CD4-positive, alpha-beta memory T cell (primary cell): ENCODE measurements at regions of chr10 and their contacts with region 1.

Region 1: DNA sequence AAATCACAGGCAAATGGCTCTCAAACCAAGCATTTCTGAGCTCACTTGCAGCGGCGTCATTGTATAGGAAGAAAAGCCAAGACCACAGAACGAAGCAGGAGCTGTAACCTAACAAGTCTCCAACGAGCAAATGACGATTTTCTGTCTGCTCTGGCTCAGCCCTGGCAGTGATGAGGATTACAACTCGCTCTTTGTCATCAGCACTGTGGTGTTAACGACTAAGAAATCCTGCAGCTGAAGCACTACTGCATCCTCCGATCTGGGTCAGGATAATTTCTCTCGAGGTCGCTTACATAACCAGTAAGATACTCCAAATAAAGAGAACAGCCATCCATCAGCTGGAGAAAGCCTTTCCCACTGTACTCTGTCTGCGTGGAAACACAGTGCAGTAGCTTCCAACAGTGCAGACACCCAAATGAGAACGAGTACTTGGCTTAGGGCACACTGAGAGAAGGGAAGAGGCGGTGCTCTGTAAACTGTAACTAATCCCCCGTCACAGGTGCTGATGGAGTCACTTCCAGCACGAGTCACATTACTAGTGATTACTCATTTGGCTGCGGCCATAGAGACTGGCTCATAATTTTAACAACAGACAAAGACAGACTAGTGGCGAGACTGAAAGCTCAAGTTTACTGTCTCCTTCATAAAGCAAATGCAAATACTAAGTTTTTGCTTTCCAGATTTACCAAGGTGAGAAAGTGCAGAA is 135.8 kb downstream of the NRBF2 start:
- DNase-seq: peak; percentile 86 to 95 (median 92)
- H3K4me3 ChIP-seq: peak overlapping the region; percentile 59 to 83
- H3K4me3 Mint-ChIP-seq: peak overlapping the region; percentile 96 to 100 (median 98)
- H3K27ac ChIP-seq: peak overlapping the region; percentile 94
- H3K27ac Mint-ChIP-seq: peak overlapping the region; percentile 95 to 100 (median 100)
- H3K4me1 ChIP-seq: peaks cover 35% of the 10 kb centered on the region
- H3K4me1 Mint-ChIP-seq: peaks cover 10 to 25% (median 19%) of the 10 kb centered on the region in 4 donors
- H3K27me3 ChIP-seq: no peaks in the 10 kb centered on the region
- H3K27me3 Mint-ChIP-seq: no peaks in the 10 kb centered on the region

Region 2: GRCh38 chr10:61628875-61629513 is 1640.0 kb before region 1 on chr10:
- CTCF ChIA-PET with region 1: no interaction called
- POLR2A ChIA-PET with region 1: no interaction called
- intact Hi-C with region 1: no loop called
- DNase-seq: no peak
- H3K4me3 ChIP-seq: no peak overlapping the region
- H3K4me3 Mint-ChIP-seq: no peak overlapping the region
- H3K27ac ChIP-seq: no peak overlapping the region
- H3K27ac Mint-ChIP-seq: peak overlapping the region in 1 of 7 donors; percentile 21
- H3K4me1 ChIP-seq: no peaks in the 10 kb centered on the region
- H3K4me1 Mint-ChIP-seq: no peaks in the 10 kb centered on the region
- H3K27me3 ChIP-seq: no peaks in the 10 kb centered on the region
- H3K27me3 Mint-ChIP-seq: peaks cover 5 to 10% of the 10 kb centered on the region in 2 donors

Region 3: GRCh38 chr10:63133056-63133820 is 135.7 kb before region 1 on chr10 and contains the start of gene NRBF2:
- CTCF ChIA-PET with region 1: no interaction called
- POLR2A ChIA-PET with region 1: interaction called, 5 read pairs
- intact Hi-C with region 1: loop called (anchors 1 kb)
- DNase-seq: peak; percentile 97 to 98 (median 98)
- H3K4me3 ChIP-seq: peak within 1 kb of the TSS; percentile 81 to 88
- H3K4me3 Mint-ChIP-seq: peak within 1 kb of the TSS; percentile 92 to 95 (median 92)
- H3K27ac ChIP-seq: peak within 1 kb of the TSS; percentile 96
- H3K27ac Mint-ChIP-seq: peak within 1 kb of the TSS; percentile 92 to 98 (median 97)
- H3K4me1 ChIP-seq: peaks cover 46% of the 10 kb centered on the region
- H3K4me1 Mint-ChIP-seq: peaks cover 24 to 45% (median 35%) of the 10 kb centered on the region in 4 donors
- H3K27me3 ChIP-seq: no peaks in the 10 kb centered on the region
- H3K27me3 Mint-ChIP-seq: peaks cover 0 to 7% of the 10 kb centered on the region in 2 donors
- total RNA-seq, gene NRBF2: 17.8 to 18.2 TPM

Region 4: GRCh38 chr10:63227207-63227915 is 41.6 kb before region 1 on chr10:
- CTCF ChIA-PET with region 1: interaction called, 4 read pairs
- POLR2A ChIA-PET with region 1: interaction called, 32 read pairs
- intact Hi-C with region 1: loop called (anchors 1 kb)
- DNase-seq: peak in 2 of 5 donors; percentile 22 to 43
- H3K4me3 ChIP-seq: no peak overlapping the region
- H3K4me3 Mint-ChIP-seq: peak overlapping the region in 6 of 8 donors; percentile 16 to 76 (median 60)
- H3K27ac ChIP-seq: no peak overlapping the region
- H3K27ac Mint-ChIP-seq: peak overlapping the region; percentile 38 to 95 (median 89)
- H3K4me1 ChIP-seq: peaks cover 64% of the 10 kb centered on the region
- H3K4me1 Mint-ChIP-seq: peaks cover 42 to 73% (median 48%) of the 10 kb centered on the region in 4 donors
- H3K27me3 ChIP-seq: no peaks in the 10 kb centered on the region
- H3K27me3 Mint-ChIP-seq: no peaks in the 10 kb centered on the region

Region 5: DNA sequence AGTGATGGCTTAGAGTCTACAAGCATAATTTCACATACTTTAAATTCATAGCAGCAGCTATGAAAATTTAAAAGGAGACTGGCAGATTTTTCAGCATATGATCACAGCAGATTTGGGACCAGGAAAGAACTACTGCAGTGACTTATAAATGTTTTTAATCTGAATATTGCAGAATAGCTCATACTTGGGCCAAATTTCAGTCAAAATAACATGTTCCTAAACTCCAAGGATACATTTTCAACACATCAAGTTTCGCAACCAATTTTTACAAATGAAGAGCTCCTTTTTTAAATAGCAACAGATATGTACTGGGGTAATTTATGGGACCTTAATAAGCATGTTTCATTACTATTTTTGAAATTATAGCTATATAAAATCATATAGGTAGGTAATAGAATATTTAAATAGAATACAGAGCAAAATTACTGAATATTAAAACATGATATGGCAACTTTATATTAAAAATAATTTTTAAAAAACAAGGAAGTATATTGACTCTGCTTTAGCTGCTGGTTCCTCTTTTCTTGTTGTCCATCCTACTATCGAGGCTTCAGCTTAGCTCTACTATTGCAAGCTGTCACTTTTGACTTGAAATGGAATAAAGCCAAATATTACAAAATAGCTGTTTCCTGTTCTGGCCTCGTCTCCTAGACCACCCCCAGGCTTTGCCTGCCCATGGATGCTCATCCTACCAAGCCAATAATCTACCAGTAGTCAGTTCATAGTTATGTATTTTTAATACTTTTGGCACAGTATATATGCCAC is 12.8 kb before region 1 on chr10:
- CTCF ChIA-PET with region 1: interaction called, 3 read pairs
- POLR2A ChIA-PET with region 1: interaction called, 50 read pairs
- intact Hi-C with region 1: no loop called
- DNase-seq: no peak
- H3K4me3 ChIP-seq: no peak overlapping the region
- H3K4me3 Mint-ChIP-seq: peak overlapping the region in 5 of 8 donors; percentile 7 to 58 (median 25)
- H3K27ac ChIP-seq: no peak overlapping the region
- H3K27ac Mint-ChIP-seq: peak overlapping the region; percentile 0 to 82 (median 44)
- H3K4me1 ChIP-seq: peaks cover 88% of the 10 kb centered on the region
- H3K4me1 Mint-ChIP-seq: peaks cover 56 to 95% (median 76%) of the 10 kb centered on the region in 4 donors
- H3K27me3 ChIP-seq: no peaks in the 10 kb centered on the region
- H3K27me3 Mint-ChIP-seq: no peaks in the 10 kb centered on the region

Region 6: GRCh38 chr10:63318491-63318890 is 49.5 kb after region 1 on chr10:
- CTCF ChIA-PET with region 1: no interaction called
- POLR2A ChIA-PET with region 1: no interaction called
- intact Hi-C with region 1: no loop called
- DNase-seq: no peak
- H3K4me3 ChIP-seq: no peak overlapping the region
- H3K4me3 Mint-ChIP-seq: no peak overlapping the region
- H3K27ac ChIP-seq: no peak overlapping the region
- H3K27ac Mint-ChIP-seq: no peak overlapping the region
- H3K4me1 ChIP-seq: no peaks in the 10 kb centered on the region
- H3K4me1 Mint-ChIP-seq: peaks cover 0 to 7% (median 3%) of the 10 kb centered on the region in 4 donors
- H3K27me3 ChIP-seq: no peaks in the 10 kb centered on the region
- H3K27me3 Mint-ChIP-seq: no peaks in the 10 kb centered on the region

Region 7: GRCh38 chr10:63465293-63466143 is 196.6 kb after region 1 on chr10 and contains the start of gene JMJD1C:
- CTCF ChIA-PET with region 1: interaction called, 4 read pairs
- POLR2A ChIA-PET with region 1: interaction called, 11 read pairs
- intact Hi-C with region 1: loop called (anchors 2 kb)
- DNase-seq: peak; percentile 63 to 70 (median 67)
- H3K4me3 ChIP-seq: peak within 1 kb of the TSS; percentile 58 to 71
- H3K4me3 Mint-ChIP-seq: peak within 1 kb of the TSS; percentile 94 to 98 (median 96)
- H3K27ac ChIP-seq: peak within 1 kb of the TSS; percentile 58
- H3K27ac Mint-ChIP-seq: peak within 1 kb of the TSS; percentile 85 to 94 (median 93)
- H3K4me1 ChIP-seq: peaks cover 16% of the 10 kb centered on the region
- H3K4me1 Mint-ChIP-seq: peaks cover 17 to 31% (median 19%) of the 10 kb centered on the region in 4 donors
- H3K27me3 ChIP-seq: no peaks in the 10 kb centered on the region
- H3K27me3 Mint-ChIP-seq: no peaks in the 10 kb centered on the region
- total RNA-seq, gene JMJD1C: 113 to 115 TPM

Region 8: DNA sequence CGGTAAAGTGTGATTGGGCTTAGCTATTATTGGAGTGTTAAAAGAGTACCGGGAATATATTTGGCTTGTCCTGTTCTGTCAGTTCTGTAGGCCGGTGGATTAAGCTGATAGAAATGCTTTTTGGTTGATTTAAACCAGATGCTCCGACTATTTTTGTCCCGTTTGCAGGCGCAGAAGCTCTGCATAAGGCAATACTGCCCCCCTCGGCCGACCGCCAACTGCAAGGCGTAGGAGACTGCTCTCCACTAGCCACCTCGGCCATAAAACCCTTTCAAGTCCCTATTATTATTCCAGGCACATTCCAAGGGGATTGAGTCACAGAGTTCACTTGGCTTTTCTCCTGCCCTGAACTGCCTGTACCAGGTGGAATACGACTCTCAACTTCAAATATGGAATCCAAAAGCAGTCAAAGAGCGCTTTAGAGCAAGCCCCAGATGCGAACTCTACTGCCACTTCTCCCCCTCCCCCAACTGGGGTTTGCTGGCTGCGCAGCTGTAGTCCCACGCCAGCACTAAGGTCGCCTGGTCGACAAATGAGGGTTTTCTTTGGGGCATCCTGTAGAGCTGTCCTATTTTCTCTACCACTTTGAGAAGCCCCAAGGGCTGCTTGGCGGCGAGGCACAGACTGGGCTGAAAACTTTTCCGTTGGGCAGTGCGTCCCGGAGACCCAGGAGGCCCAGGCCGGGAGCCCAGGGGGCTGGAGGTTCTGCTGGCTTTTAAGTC is 360.6 kb after region 1 on chr10:
- CTCF ChIA-PET with region 1: interaction called, 9 read pairs
- POLR2A ChIA-PET with region 1: interaction called, 40 read pairs
- intact Hi-C with region 1: loop called (anchors 1 kb)
- DNase-seq: peak; percentile 76 to 81 (median 77)
- H3K4me3 ChIP-seq: peak overlapping the region; percentile 59 to 70
- H3K4me3 Mint-ChIP-seq: peak overlapping the region; percentile 92 to 97 (median 95)
- H3K27ac ChIP-seq: peak overlapping the region; percentile 55
- H3K27ac Mint-ChIP-seq: peak overlapping the region; percentile 57 to 96 (median 92)
- H3K4me1 ChIP-seq: peaks cover 28% of the 10 kb centered on the region
- H3K4me1 Mint-ChIP-seq: peaks cover 17 to 29% (median 22%) of the 10 kb centered on the region in 4 donors
- H3K27me3 ChIP-seq: no peaks in the 10 kb centered on the region
- H3K27me3 Mint-ChIP-seq: no peaks in the 10 kb centered on the region

Region 9: GRCh38 chr10:64306729-64307327 is 1037.9 kb after region 1 on chr10:
- CTCF ChIA-PET with region 1: no interaction called
- POLR2A ChIA-PET with region 1: no interaction called
- intact Hi-C with region 1: no loop called
- DNase-seq: no peak
- H3K4me3 ChIP-seq: no peak overlapping the region
- H3K4me3 Mint-ChIP-seq: no peak overlapping the region
- H3K27ac ChIP-seq: no peak overlapping the region
- H3K27ac Mint-ChIP-seq: no peak overlapping the region
- H3K4me1 ChIP-seq: no peaks in the 10 kb centered on the region
- H3K4me1 Mint-ChIP-seq: no peaks in the 10 kb centered on the region
- H3K27me3 ChIP-seq: no peaks in the 10 kb centered on the region
- H3K27me3 Mint-ChIP-seq: no peaks in the 10 kb centered on the region